OCI-LY7 (cell line): ENCODE measurements at regions of chr6 and their contacts with region 1.

Region 1: DNA sequence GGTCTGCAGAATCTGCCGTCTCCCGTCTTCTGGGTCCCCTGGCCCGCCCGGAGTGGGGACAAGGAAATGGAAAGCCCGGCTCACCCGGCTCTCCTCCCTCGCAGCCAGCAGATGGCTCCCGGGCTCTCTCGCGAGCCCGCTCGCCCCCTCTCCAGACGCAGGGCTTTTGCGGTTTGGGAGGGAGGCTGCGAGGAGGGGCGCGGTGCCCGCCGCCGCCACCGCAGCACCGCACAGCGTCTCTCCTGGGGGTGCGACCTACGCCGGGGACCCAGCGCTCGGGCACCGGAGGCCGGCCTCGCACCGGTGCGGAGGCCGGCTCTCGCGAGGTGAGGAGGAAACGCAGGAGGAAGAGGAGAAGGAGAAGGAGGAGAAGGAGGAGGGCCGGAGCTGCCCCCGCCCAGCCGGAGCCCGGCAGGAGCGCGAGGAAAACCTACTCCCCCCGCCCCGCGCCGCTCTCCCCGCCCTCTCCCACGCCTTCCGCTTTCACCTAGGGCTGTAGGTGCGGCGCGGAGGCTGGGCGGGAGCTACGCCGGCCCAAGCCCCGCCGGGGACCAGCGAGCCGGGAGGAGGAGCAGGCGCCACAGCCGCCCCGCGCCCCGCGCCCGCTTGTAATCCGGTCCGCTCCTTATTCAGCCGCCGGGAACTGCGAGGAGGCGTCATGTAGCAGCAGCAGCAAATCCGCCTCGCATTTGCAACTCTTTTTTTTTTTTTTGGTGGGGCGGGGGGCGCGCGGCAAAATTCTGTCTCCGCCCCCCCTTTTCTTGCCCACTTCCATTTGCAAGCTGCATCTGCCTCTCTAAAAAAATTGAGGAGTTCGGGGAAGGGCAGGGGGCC is at the start of gene CARMIL1:
- DNase-seq: peak; percentile 89
- H3K4me3 ChIP-seq: peak within 1 kb of the TSS; percentile 99
- H3K27ac ChIP-seq: peak within 1 kb of the TSS; percentile 47
- H3K4me1 ChIP-seq: peaks cover 52% of the 10 kb centered on the region
- CTCF ChIP-seq: peak; percentile 81
- total RNA-seq, gene CARMIL1: 21.8 and 25.5 TPM in 2 replicates

Region 2: GRCh38 chr6:24710519-24711303 is 568.4 kb before region 1 on chr6:
- CTCF ChIA-PET with region 1: no interaction called
- POLR2A ChIA-PET with region 1: no interaction called
- intact Hi-C with region 1: no loop called
- DNase-seq: no peak
- H3K4me3 ChIP-seq: no peak overlapping the region
- H3K27ac ChIP-seq: no peak overlapping the region
- H3K4me1 ChIP-seq: no peaks in the 10 kb centered on the region
- CTCF ChIP-seq: no peak

Region 3: DNA sequence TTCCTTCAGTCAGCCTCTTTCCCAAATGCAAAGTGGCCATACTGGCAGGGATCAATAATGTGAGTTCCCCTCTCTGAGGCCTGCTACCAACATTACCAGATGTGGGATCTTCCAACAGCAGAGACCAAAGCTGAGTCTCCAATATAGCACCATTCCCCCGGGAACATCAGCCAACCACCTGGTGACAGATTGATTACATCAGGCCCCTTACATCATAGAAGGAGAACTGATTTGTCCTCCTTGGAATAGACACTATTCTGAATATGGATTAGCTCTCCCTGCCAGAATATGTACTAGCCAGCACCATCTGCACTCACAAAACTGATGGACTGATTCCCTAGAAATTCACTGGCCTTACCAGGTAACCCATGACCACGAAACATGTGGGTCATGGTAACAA is 61.8 kb before region 1 on chr6:
- CTCF ChIA-PET with region 1: no interaction called
- POLR2A ChIA-PET with region 1: no interaction called
- intact Hi-C with region 1: no loop called
- DNase-seq: no peak
- H3K4me3 ChIP-seq: no peak overlapping the region
- H3K27ac ChIP-seq: no peak overlapping the region
- H3K4me1 ChIP-seq: no peaks in the 10 kb centered on the region
- CTCF ChIP-seq: no peak

Region 4: DNA sequence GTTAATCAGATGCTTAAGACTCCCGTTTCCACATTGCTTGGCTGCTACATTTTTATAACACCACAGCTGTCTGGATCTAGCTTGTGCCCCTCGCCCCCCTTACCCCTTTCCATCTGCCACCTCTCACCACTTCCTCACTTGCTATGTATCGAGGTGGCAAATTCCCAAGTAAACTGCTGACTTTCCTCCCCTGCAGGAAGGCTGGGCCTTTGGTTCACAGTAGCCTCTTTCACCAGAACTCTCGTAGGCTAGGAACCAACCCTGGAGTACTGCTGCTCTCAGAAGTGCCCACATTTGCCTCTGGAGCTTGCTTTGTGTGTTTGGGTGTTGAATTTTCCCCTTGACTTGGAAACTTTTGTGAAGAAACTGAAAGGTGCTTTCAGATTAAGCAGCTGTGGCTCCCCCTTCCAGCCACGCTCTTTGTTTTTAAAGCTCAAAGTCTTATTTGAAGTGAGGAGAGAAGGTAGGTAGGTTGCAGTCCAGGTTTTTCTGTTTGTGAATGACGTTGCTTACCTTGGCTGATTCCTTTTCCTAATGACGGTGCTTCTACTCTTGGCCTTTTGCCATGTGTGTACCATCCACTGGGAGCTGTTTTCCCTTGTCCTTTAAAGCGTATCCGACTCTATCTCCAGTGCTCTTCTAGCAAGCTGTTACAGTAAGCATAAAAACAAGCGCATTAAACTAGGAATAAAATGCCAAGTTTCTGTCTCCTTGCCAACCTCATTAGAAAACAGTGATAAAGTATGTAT is 90.5 kb after region 1 on chr6:
- CTCF ChIA-PET with region 1: interaction called, 4 read pairs
- POLR2A ChIA-PET with region 1: interaction called, 14 read pairs
- intact Hi-C with region 1: loop called (anchors 1 kb)
- DNase-seq: peak; percentile 59
- H3K4me3 ChIP-seq: peak overlapping the region; percentile 65
- H3K27ac ChIP-seq: peak overlapping the region; percentile 87
- H3K4me1 ChIP-seq: peaks cover 90% of the 10 kb centered on the region
- CTCF ChIP-seq: 0 out of 2 replicates have a peak, but pooled peaks have one; percentile 16

Region 5: DNA sequence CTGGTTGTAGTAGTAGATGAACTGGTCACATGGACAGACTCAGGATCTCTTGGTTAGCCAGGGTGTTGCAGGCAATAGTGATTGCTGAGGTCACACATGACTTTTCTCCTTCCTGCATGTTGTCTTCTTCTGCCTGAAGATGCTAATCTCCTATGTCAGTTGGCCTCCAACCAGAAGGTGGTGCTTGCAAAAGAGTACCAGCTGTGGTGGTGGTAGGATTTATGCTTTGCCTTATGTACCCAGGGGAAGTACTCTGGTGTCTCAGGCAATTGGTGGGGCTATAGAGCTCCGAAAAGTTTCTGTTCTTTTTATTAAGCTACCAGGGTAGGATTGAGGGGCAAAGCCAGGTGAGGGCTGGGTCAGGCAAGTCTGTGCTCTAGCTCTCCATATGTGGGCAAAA is 98.5 kb after region 1 on chr6:
- CTCF ChIA-PET with region 1: interaction called, 4 read pairs
- POLR2A ChIA-PET with region 1: interaction called, 7 read pairs
- intact Hi-C with region 1: loop called (anchors 2 kb)
- DNase-seq: peak; percentile 92
- H3K4me3 ChIP-seq: peak overlapping the region; percentile 64
- H3K27ac ChIP-seq: peak overlapping the region; percentile 82
- H3K4me1 ChIP-seq: peaks cover 76% of the 10 kb centered on the region
- CTCF ChIP-seq: peak; percentile 83

Region 6: DNA sequence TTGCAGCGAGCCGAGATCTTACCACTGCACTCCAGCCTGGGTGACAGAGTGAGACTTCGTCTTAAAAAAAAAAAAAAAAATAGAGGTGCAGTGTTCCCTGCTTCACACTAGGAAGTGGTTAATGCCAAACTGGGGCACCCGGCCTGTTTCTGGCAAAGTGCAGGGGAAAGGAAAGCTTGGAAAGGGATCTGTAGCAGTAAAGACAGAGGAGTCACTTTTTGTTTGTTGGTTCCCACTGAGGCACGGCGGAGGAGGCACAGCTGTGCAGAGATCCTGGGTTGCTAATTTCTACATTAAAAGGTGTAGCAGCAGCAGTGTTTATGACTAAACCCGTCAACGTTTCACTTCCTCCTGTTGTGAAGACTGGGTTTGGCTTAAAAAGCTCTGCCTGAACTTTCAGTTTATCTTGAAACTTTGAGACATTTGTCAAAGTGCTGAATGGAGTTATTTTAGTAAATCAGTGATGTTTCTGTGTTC is 125.6 kb after region 1 on chr6:
- CTCF ChIA-PET with region 1: no interaction called
- POLR2A ChIA-PET with region 1: interaction called, 13 read pairs
- intact Hi-C with region 1: loop called (anchors 2 kb)
- DNase-seq: peak; percentile 89
- H3K4me3 ChIP-seq: peak overlapping the region; percentile 63
- H3K27ac ChIP-seq: peak overlapping the region; percentile 98
- H3K4me1 ChIP-seq: peaks cover 98% of the 10 kb centered on the region
- CTCF ChIP-seq: no peak

Region 7: DNA sequence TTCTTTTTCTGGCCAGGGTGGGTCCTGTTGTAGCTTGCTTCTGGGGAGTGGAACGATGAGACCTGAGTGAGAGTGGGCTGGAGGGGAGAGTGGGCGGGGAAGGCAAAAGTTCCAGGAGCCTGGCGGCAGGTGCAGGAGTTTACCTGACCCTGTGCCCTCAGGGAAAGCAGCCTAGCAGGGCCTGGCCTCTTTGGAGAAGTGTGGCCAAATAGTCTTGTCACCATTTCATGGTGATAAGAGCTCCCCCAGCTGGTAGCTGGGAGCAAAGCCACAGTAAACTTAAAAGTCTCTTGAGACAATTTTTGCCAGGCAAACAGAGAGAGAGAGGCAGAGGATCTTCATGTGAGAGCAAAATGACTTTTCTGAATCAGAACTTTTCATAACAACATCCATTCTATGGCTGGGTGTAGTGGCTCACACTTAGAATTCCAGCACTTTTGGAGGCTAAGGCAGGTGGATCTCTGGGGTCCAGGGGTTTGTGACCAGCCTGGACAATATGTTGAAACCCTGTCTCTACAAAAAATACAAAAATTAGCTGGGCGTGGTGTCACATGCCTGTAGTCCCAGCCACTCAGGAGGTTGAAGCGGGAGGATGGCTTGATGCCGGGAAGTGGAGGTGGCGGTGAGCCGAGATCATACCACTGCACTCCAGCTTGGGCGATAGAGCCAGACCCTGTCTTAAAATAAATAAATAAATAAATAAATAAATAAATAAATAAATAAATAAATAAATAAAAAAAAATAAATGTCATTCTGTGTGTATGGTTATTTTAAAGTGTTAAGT is 211.1 kb after region 1 on chr6:
- CTCF ChIA-PET with region 1: interaction called, 28 read pairs
- POLR2A ChIA-PET with region 1: interaction called, 25 read pairs
- intact Hi-C with region 1: loop called (anchors 1 kb)
- DNase-seq: peak; percentile 93
- H3K4me3 ChIP-seq: no peak overlapping the region
- H3K27ac ChIP-seq: peak overlapping the region; percentile 55
- H3K4me1 ChIP-seq: peaks cover 23% of the 10 kb centered on the region
- CTCF ChIP-seq: peak; percentile 90

Region 8: GRCh38 chr6:25556516-25556915 is 277.4 kb after region 1 on chr6:
- CTCF ChIA-PET with region 1: no interaction called
- POLR2A ChIA-PET with region 1: no interaction called
- intact Hi-C with region 1: loop called (anchors 1 kb)
- DNase-seq: peak; percentile 80
- H3K4me3 ChIP-seq: no peak overlapping the region
- H3K27ac ChIP-seq: no peak overlapping the region
- H3K4me1 ChIP-seq: peaks cover 7% of the 10 kb centered on the region
- CTCF ChIP-seq: peak; percentile 97